ENCODE measurements at regions of chr3 and their contacts with region 1.

Region 1: DNA sequence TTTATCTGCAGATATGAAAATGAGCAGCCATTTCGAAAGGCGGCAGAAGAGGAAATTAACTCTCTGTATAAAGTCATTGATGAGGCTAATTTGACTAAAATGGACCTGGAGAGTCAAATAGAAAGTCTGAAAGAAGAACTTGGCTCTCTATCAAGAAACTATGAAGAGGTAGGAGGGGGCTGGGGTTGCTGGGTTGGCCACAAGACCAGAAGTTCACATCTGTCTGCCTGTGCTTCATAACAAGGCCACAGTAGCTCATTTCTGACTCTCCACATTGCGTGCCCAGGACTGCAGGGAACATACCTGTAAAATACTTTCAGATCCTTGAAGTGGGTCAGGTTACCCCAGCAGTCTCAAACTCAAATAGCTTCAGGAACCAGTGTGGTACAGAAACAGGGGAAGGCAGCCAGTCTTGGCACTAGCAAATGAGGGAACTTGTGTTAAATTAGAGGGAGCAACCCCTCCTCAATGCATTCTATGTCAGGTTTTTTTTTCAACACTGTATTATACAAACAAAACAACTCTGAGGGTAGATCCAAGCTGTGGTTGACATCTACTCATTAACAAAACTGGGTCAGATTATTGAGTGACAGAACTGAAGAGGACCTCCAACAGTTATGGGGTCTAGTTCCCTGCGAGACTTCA is 48.7 kb downstream of the BFSP2 start:
- DNase-seq: peak; percentile 90
- ATAC-seq: peak; percentile 88
- H3K4me3 ChIP-seq: no peak overlapping the region
- H3K4me3 Mint-ChIP-seq: peak overlapping the region; percentile 80
- H3K27ac ChIP-seq: peak overlapping the region; percentile 47 to 52
- H3K27ac Mint-ChIP-seq: peak overlapping the region; percentile 90
- H3K4me1 ChIP-seq: peaks cover 35 to 41% of the 10 kb centered on the region in 2 donors
- H3K4me1 Mint-ChIP-seq: peaks cover 49% of the 10 kb centered on the region
- H3K27me3 ChIP-seq: peaks cover 0 to 10% (median 5%) of the 10 kb centered on the region in 4 experiments
- H3K27me3 Mint-ChIP-seq: no peaks in the 10 kb centered on the region
- CTCF ChIP-seq: no peak

Region 2: GRCh38 chr3:133426721-133427120 is 21.9 kb before region 1 on chr3:
- CTCF ChIA-PET with region 1: interaction called, 15 read pairs
- POLR2A ChIA-PET with region 1: no interaction called
- intact Hi-C with region 1: loop called (anchors 2 kb)
- DNase-seq: no peak
- ATAC-seq: no peak
- H3K4me3 ChIP-seq: no peak overlapping the region
- H3K4me3 Mint-ChIP-seq: no peak overlapping the region
- H3K27ac ChIP-seq: no peak overlapping the region
- H3K27ac Mint-ChIP-seq: no peak overlapping the region
- H3K4me1 ChIP-seq: peaks cover 0 to 16% of the 10 kb centered on the region in 2 donors
- H3K4me1 Mint-ChIP-seq: peaks cover 13% of the 10 kb centered on the region
- H3K27me3 ChIP-seq: peaks cover 0 to 8% (median 2%) of the 10 kb centered on the region in 4 experiments
- H3K27me3 Mint-ChIP-seq: peaks cover 3% of the 10 kb centered on the region
- CTCF ChIP-seq: no peak

Region 3: GRCh38 chr3:133475245-133476010 is 26.8 kb after region 1 on chr3:
- CTCF ChIA-PET with region 1: interaction called, 8 read pairs
- POLR2A ChIA-PET with region 1: interaction called, 3 read pairs
- intact Hi-C with region 1: loop called (anchors 1 kb)
- DNase-seq: peak; percentile 81
- ATAC-seq: peak; percentile 73
- H3K4me3 ChIP-seq: peak overlapping the region in 1 of 5 experiments; percentile 25
- H3K4me3 Mint-ChIP-seq: peak overlapping the region; percentile 81
- H3K27ac ChIP-seq: peak overlapping the region; percentile 75 to 82
- H3K27ac Mint-ChIP-seq: peak overlapping the region; percentile 87
- H3K4me1 ChIP-seq: peaks cover 59 to 74% of the 10 kb centered on the region in 2 donors
- H3K4me1 Mint-ChIP-seq: peaks cover 72% of the 10 kb centered on the region
- H3K27me3 ChIP-seq: no peaks in the 10 kb centered on the region
- H3K27me3 Mint-ChIP-seq: no peaks in the 10 kb centered on the region
- CTCF ChIP-seq: no peak

Region 4: GRCh38 chr3:133620066-133620784 is 171.6 kb after region 1 on chr3:
- CTCF ChIA-PET with region 1: no interaction called
- POLR2A ChIA-PET with region 1: no interaction called
- intact Hi-C with region 1: loop called (anchors 5 kb)
- DNase-seq: peak; percentile 77
- ATAC-seq: peak; percentile 97
- H3K4me3 ChIP-seq: no peak overlapping the region
- H3K4me3 Mint-ChIP-seq: peak overlapping the region; percentile 52
- H3K27ac ChIP-seq: peak overlapping the region; percentile 33 to 59
- H3K27ac Mint-ChIP-seq: peak overlapping the region; percentile 83
- H3K4me1 ChIP-seq: peaks cover 0 to 12% of the 10 kb centered on the region in 2 donors
- H3K4me1 Mint-ChIP-seq: peaks cover 13% of the 10 kb centered on the region
- H3K27me3 ChIP-seq: no peaks in the 10 kb centered on the region
- H3K27me3 Mint-ChIP-seq: no peaks in the 10 kb centered on the region
- CTCF ChIP-seq: no peak

Region 5: GRCh38 chr3:133805527-133806475 is 357.2 kb after region 1 on chr3 and contains the start of gene SRPRB:
- CTCF ChIA-PET with region 1: no interaction called
- POLR2A ChIA-PET with region 1: no interaction called
- intact Hi-C with region 1: loop called (anchors 10 kb)
- DNase-seq: peak; percentile 95
- ATAC-seq: peak; percentile 98
- H3K4me3 ChIP-seq: peak within 1 kb of the TSS; percentile 56 to 95 (median 87)
- H3K4me3 Mint-ChIP-seq: peak within 1 kb of the TSS; percentile 99
- H3K27ac ChIP-seq: peak within 1 kb of the TSS; percentile 75 to 80
- H3K27ac Mint-ChIP-seq: peak within 1 kb of the TSS; percentile 94
- H3K4me1 ChIP-seq: peaks cover 11 to 13% of the 10 kb centered on the region in 2 donors
- H3K4me1 Mint-ChIP-seq: peaks cover 18% of the 10 kb centered on the region
- H3K27me3 ChIP-seq: no peaks in the 10 kb centered on the region
- H3K27me3 Mint-ChIP-seq: no peaks in the 10 kb centered on the region
- CTCF ChIP-seq: no peak
- total RNA-seq, gene SRPRB: 28.8 and 29.7 TPM in 2 replicates